Common myeloid progenitor, CD34-positive (primary cell): ENCODE measurements at regions of chr2 and their contacts with region 1.

Region 1: GRCh38 chr2:128736689-128737545 is 418.2 kb upstream of the HS6ST1 start:
- DNase-seq: peak; percentile 65 to 81 (median 80)
- H3K4me3 ChIP-seq: peak overlapping the region in 6 of 7 experiments; percentile 13 to 71 (median 44)
- H3K27ac ChIP-seq: no peak overlapping the region
- H3K4me1 ChIP-seq: peaks cover 0 to 49% (median 41%) of the 10 kb centered on the region in 4 experiments
- H3K27me3 ChIP-seq: no peaks in the 10 kb centered on the region

Region 2: GRCh38 chr2:128692895-128693742 is 43.8 kb before region 1 on chr2:
- CTCF ChIA-PET with region 1: interaction called, 11 read pairs
- POLR2A ChIA-PET with region 1: no interaction called
- DNase-seq: no peak
- H3K4me3 ChIP-seq: no peak overlapping the region
- H3K27ac ChIP-seq: no peak overlapping the region
- H3K4me1 ChIP-seq: peaks cover 0 to 6% (median 2%) of the 10 kb centered on the region in 4 experiments
- H3K27me3 ChIP-seq: no peaks in the 10 kb centered on the region

Region 3: GRCh38 chr2:128714851-128715312 is 22.0 kb before region 1 on chr2:
- CTCF ChIA-PET with region 1: interaction called, 44 read pairs
- POLR2A ChIA-PET with region 1: no interaction called
- DNase-seq: peak; percentile 39 to 86 (median 82)
- H3K4me3 ChIP-seq: no peak overlapping the region
- H3K27ac ChIP-seq: peak overlapping the region in 1 of 2 experiments; percentile 20
- H3K4me1 ChIP-seq: peaks cover 12 to 58% (median 52%) of the 10 kb centered on the region in 4 experiments
- H3K27me3 ChIP-seq: no peaks in the 10 kb centered on the region

Region 4: GRCh38 chr2:128748336-128748735 is 11.4 kb after region 1 on chr2:
- CTCF ChIA-PET with region 1: interaction called, 21 read pairs
- POLR2A ChIA-PET with region 1: no interaction called
- DNase-seq: no peak
- H3K4me3 ChIP-seq: no peak overlapping the region
- H3K27ac ChIP-seq: no peak overlapping the region
- H3K4me1 ChIP-seq: peaks cover 2 to 23% (median 6%) of the 10 kb centered on the region in 4 experiments
- H3K27me3 ChIP-seq: no peaks in the 10 kb centered on the region

Region 5: DNA sequence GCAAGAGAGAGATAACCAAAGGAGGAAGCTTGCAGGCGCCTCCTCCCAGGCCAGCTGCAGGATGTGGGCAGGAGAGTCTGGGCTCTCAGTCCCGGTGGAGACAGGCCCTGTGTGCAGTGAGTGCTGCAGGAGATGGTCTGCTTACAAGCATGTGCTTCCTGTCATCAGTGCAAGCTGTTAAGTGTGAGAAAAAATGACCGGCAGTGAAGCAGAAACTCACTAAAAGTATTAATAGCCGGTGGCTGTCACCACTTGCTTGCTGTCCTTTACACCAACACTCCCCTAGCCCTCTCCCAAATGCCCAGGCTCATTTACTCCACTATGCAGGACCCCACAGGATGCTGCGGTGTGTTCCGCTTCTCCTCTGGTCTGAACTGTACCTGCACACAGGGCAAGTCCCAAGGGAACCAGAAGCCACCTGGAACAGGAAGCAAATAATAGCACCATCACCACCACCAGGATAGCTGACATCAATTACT is 17.4 kb after region 1 on chr2:
- CTCF ChIA-PET with region 1: interaction called, 21 read pairs
- POLR2A ChIA-PET with region 1: interaction called, 7 read pairs
- DNase-seq: peak; percentile 77 to 98 (median 96)
- H3K4me3 ChIP-seq: peak overlapping the region in 3 of 7 experiments; percentile 15 to 48 (median 29)
- H3K27ac ChIP-seq: no peak overlapping the region
- H3K4me1 ChIP-seq: peaks cover 13 to 45% (median 27%) of the 10 kb centered on the region in 4 experiments
- H3K27me3 ChIP-seq: no peaks in the 10 kb centered on the region

Region 6: DNA sequence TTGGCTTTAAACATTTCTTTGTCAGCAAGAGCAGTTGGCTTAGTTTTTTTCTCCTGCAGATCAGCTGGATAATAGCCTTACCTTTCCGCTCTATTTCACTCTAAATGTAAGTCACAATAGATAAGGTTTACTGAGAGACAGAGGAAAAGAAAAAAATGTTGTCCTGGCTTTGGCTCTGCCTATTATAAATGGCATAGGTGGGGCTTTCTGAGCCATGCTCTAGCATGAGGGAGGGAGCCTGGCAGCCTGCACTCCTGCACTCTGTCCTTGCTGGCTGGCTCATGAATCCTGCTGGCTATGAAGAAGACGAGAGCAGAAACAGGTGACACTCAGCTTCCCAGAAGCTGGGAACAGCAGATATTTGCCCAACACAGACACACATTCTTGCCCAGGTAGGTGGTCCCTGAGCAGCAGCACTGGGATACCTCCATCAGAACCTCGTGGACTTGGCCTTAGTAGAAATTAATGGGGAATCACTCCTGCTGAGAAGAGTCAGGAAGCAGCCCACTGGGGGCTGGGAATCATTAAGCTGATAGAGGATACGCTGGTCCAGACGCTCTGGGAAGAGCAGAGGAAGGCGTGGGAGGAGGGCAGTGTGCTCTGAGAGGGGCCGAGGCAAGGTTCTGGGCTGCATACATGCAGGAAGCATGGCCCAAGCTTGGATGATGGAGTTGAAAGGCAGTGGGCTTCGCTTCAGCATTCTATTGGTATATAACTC is 96.2 kb after region 1 on chr2:
- CTCF ChIA-PET with region 1: no interaction called
- POLR2A ChIA-PET with region 1: no interaction called
- DNase-seq: no peak
- H3K4me3 ChIP-seq: no peak overlapping the region
- H3K27ac ChIP-seq: no peak overlapping the region
- H3K4me1 ChIP-seq: no peaks in the 10 kb centered on the region
- H3K27me3 ChIP-seq: peaks cover 0 to 6% (median 1%) of the 10 kb centered on the region in 5 experiments